Right ventricle myocardium inferior (tissue), 1 donor: ENCODE measurements at regions of chr6 and their contacts with region 1.

Region 1: GRCh38 chr6:28838634-28839442 is 84.9 kb downstream of the TRIM27 start:
- DNase-seq: peak; percentile 90
- ATAC-seq: peak; percentile 92

Region 2: DNA sequence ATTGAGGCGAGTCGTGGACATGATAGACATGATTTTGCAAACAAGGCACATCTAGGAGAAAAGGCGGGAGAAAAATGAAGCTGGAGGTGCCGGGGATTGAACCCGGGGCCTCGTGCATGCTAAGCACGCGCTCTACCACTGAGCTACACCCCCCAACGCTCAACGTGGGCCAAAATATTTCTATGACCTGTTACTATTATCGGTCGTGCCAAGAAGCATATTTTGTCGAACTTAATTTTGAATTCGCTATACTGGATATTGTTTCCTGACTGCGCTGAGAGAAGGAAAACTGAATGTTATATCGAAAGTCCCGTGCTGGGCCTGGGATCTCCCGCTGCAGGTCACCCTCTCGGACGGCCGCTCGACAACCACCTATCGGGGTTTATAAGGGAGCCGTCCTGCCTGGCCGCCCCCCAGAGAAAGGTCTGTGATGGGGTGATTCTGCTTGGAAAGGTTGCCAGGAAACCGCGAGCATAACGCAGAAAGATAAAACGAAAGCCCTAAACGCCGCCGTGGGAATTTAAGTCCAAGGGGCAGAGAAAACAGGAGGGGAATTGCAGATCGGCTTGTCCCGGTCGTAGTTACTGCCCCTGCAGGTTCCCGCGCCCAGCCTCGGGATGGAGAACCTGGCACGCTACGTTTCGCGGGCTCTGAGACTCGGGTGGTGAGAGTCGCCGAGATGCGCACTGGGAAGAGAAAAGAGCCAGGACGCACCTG is 24.9 kb after region 1 on chr6:
- intact Hi-C with region 1: loop called (anchors 1 kb)
- DNase-seq: peak; percentile 74
- ATAC-seq: peak; percentile 88

Region 3: GRCh38 chr6:28940858-28941680 is 102.2 kb after region 1 on chr6:
- intact Hi-C with region 1: loop called (anchors 5 kb)
- DNase-seq: no peak
- ATAC-seq: peak; percentile 86

Region 4: GRCh38 chr6:28981833-28982475 is 143.1 kb after region 1 on chr6:
- intact Hi-C with region 1: loop called (anchors 1 kb)
- DNase-seq: peak; percentile 85
- ATAC-seq: peak; percentile 86

Region 5: GRCh38 chr6:29016559-29017427 is 178.0 kb after region 1 on chr6:
- intact Hi-C with region 1: loop called (anchors 2 kb)
- DNase-seq: peak; percentile 85
- ATAC-seq: peak; percentile 91